Activated T-helper 2 cell treated with anti-CD3 and anti-CD28 coated beads, Interferon-gamma antibody, Interleukin-2, Interleukin-4, amounts not matched to agents 10 μg/mL and 5 μg/mL and 100 μg/mL, durations not matched to agents 14 hours and 24 hours and 36 hours (primary cell): ENCODE measurements at regions of chr12 and their contacts with region 1.

Region 1: GRCh38 chr12:81644503-81644902 is 114.6 kb downstream of the PPFIA2 start:
- DNase-seq: no peak
- H3K4me3 Mint-ChIP-seq: no peak overlapping the region
- H3K27ac Mint-ChIP-seq: no peak overlapping the region
- H3K4me1 Mint-ChIP-seq: no peaks in the 10 kb centered on the region
- H3K27me3 Mint-ChIP-seq: no peaks in the 10 kb centered on the region

Region 2: GRCh38 chr12:81692008-81692407 is 47.5 kb after region 1 on chr12:
- intact Hi-C with region 1: no loop called
- DNase-seq: no peak
- H3K4me3 Mint-ChIP-seq: no peak overlapping the region
- H3K27ac Mint-ChIP-seq: no peak overlapping the region
- H3K4me1 Mint-ChIP-seq: no peaks in the 10 kb centered on the region
- H3K27me3 Mint-ChIP-seq: no peaks in the 10 kb centered on the region

Region 3: GRCh38 chr12:81992461-81992860 is 348.0 kb after region 1 on chr12:
- intact Hi-C with region 1: loop called (anchors 10 kb)
- DNase-seq: no peak
- H3K4me3 Mint-ChIP-seq: no peak overlapping the region
- H3K27ac Mint-ChIP-seq: no peak overlapping the region
- H3K4me1 Mint-ChIP-seq: no peaks in the 10 kb centered on the region
- H3K27me3 Mint-ChIP-seq: no peaks in the 10 kb centered on the region

Region 4: DNA sequence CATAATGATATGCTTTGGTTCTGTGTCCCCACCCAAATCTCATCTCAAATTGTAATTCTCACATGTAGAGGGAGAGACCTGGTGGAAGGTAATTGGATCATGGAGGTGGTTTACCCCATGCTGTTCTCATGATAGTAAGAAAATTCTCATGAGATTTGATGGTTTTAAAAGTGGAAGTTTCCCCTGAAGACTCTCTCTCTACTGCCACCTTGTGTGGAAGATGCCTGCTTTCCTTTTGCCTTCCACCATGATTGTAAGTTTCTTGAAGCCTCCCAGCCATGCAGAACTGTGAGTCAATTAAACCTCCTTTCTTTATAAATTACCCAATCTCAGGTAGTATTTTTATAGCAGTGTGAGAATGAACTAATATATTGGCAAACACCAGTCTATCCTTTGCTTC is 375.0 kb after region 1 on chr12:
- intact Hi-C with region 1: loop called (anchors 2 kb)
- DNase-seq: no peak
- H3K4me3 Mint-ChIP-seq: no peak overlapping the region
- H3K27ac Mint-ChIP-seq: no peak overlapping the region
- H3K4me1 Mint-ChIP-seq: no peaks in the 10 kb centered on the region
- H3K27me3 Mint-ChIP-seq: no peaks in the 10 kb centered on the region

Region 5: DNA sequence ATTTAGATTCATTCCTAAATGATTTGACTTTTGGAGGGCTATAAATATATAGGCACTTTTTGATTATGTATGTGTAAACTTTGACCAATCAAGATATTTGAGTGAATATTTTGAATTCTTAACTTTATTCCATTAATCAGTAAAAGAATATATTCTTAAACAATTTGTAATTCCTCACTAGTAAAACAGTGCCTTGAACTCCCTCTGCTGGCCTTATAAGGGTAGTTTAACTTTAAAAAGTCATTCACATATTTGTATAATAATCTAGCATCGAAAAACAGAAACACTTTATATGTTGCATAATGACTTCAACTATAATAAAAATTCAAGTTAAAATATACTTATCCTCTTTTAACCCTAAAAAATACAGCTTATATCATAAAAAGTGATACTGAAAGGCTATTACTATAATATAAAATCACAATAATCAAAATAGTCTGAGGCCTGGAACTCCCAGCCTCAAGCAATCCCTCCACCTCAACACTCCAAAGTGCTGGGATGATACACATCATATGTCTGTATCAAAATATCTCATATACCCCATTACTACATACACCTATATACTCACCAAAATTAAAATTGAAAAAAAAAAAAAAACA is 682.5 kb after region 1 on chr12:
- intact Hi-C with region 1: loop called (anchors 2 kb)
- DNase-seq: no peak
- H3K4me3 Mint-ChIP-seq: no peak overlapping the region
- H3K27ac Mint-ChIP-seq: no peak overlapping the region
- H3K4me1 Mint-ChIP-seq: no peaks in the 10 kb centered on the region
- H3K27me3 Mint-ChIP-seq: no peaks in the 10 kb centered on the region

Region 6: GRCh38 chr12:82358200-82359114 is 714.0 kb after region 1 on chr12 and contains the starts of genes CCDC59 and METTL25:
- intact Hi-C with region 1: loop called (anchors 1 kb)
- DNase-seq: peak; percentile 94
- H3K4me3 Mint-ChIP-seq: peak within 1 kb of the TSS; percentile 99
- H3K27ac Mint-ChIP-seq: peak within 1 kb of the TSS; percentile 100
- H3K4me1 Mint-ChIP-seq: peaks cover 28% of the 10 kb centered on the region
- H3K27me3 Mint-ChIP-seq: no peaks in the 10 kb centered on the region
- total RNA-seq, gene CCDC59: 84.1 and 84.5 TPM in 2 replicates
- total RNA-seq, gene METTL25: 6.9 and 7.3 TPM in 2 replicates